ENCODE measurements at regions of chr3 and their contacts with region 1.

Region 1: GRCh38 chr3:48918388-48919214 is at the start of gene ARIH2:
- H3K4me3 Mint-ChIP-seq: peak within 1 kb of the TSS; percentile 95
- H3K27ac Mint-ChIP-seq: peak within 1 kb of the TSS; percentile 97
- H3K4me1 Mint-ChIP-seq: peaks cover 21% of the 10 kb centered on the region
- H3K27me3 Mint-ChIP-seq: no peaks in the 10 kb centered on the region

Region 2: DNA sequence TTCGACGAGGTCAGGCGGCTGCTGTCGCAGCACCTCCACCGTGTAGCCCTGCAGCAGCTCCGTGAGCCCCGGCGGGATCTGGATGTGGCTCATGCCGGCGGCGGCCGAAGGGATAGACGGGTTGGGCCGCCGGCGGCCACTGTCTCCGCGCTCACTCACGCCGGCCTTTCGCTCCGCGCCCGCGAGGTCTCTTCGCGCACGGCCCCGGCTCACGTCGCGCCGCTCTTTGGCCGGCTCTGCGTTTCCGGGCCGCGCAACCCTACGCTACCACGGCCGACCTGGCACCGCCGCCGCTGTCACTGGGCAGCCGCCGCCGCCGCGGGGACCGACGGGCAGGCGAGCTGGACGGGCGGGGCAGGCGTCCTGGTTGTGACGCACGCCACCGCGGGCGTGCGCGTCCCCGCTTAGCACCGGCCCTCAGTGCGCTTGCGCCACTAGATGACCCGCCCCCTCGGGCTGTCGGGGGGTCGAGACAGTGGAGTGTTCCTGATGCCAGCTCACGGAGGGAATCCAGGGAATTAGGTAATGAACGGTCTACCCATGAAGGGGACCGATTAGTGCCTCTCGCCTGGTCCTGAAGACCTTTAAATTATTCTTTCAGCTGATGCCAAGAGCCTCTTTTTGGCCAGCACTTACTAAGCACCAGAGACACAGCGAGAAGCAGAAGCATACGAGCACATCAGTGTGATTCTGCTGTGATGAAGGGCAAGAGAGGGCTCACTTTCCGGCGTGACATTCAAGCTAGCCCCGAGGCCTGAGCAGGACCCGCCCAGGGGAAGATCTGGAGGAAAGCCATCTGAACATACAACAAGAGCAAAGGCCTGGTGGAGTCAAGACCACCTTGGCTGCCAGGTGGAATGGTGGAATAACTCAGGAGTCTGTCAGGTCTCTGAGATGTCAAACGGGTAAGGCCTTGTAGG is 70.8 kb before region 1 on chr3 and contains the start of gene PRKAR2A:
- intact Hi-C with region 1: loop called (anchors 5 kb)
- H3K4me3 Mint-ChIP-seq: peak within 1 kb of the TSS; percentile 83
- H3K27ac Mint-ChIP-seq: peak within 1 kb of the TSS; percentile 96
- H3K4me1 Mint-ChIP-seq: peaks cover 34% of the 10 kb centered on the region
- H3K27me3 Mint-ChIP-seq: no peaks in the 10 kb centered on the region